ENCODE measurements at regions of chr3 and their contacts with region 1.

Region 1: GRCh38 chr3:98039322-98040024 is 4.4 kb upstream of the GABRR3 start:
- DNase-seq: peak; percentile 17 to 81
- H3K4me3 ChIP-seq: peak overlapping the region; percentile 28 to 70 (median 48); a peak in 5 of 8 replicates
- H3K27ac ChIP-seq: no peak overlapping the region
- H3K4me1 ChIP-seq: no peaks in the 10 kb centered on the region
- H3K27me3 ChIP-seq: no peaks in the 10 kb centered on the region
- CTCF ChIP-seq: peak in 2 of 3 experiments; percentile 66 to 73; a peak in 3 of 4 replicates
- EP300 ChIP-seq: no peak
- POLR2A ChIP-seq: no peak
- RAD21 ChIP-seq: peak; percentile 83 to 88

Region 2: GRCh38 chr3:98022978-98023820 is 16.3 kb before region 1 on chr3:
- CTCF ChIA-PET with region 1: interaction called, 57 read pairs
- POLR2A ChIA-PET with region 1: no interaction called
- DNase-seq: peak; percentile 71 to 99
- H3K4me3 ChIP-seq: no peak overlapping the region
- H3K27ac ChIP-seq: no peak overlapping the region
- H3K4me1 ChIP-seq: no peaks in the 10 kb centered on the region
- H3K27me3 ChIP-seq: no peaks in the 10 kb centered on the region
- CTCF ChIP-seq: peak; percentile 74 to 91 (median 83)
- EP300 ChIP-seq: no peak
- POLR2A ChIP-seq: no peak
- RAD21 ChIP-seq: peak; percentile 95 to 96

Region 3: DNA sequence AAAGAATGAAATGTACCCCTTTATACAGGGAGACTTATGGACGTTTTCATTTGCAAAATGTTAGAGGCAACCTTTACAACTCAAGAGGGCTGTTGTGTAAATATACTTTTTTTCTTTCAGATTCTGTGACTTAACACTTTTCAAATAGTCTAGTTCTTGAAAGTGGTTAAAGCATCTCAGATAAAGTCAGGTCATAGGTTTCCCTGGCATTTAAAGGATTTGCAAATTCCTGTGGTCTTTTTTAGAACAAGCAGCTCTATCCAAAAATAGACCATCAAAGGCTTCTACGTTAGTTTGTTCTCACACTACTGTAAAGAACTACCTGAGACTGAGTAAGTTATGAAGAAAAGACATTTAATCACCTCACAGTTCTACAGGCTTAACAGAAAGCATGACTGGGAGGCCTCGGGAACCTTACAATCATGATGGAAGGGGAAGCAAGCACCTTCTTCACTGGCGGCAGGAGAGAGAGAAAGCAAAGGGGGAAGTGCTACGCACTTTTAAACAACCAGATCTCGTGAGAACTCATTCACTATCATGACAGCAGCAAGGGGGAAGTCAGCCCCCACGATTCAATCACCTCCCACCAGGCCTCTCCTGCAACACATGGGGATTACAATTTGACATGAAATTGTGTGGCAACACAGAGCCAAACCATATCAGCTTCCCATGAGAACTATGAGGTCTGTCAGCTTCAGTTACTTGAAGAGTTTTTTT is 18.9 kb after region 1 on chr3:
- CTCF ChIA-PET with region 1: interaction called, 24 read pairs
- POLR2A ChIA-PET with region 1: no interaction called
- DNase-seq: no peak
- H3K4me3 ChIP-seq: no peak overlapping the region
- H3K27ac ChIP-seq: no peak overlapping the region
- H3K4me1 ChIP-seq: no peaks in the 10 kb centered on the region
- H3K27me3 ChIP-seq: no peaks in the 10 kb centered on the region
- CTCF ChIP-seq: no peak
- EP300 ChIP-seq: no peak
- POLR2A ChIP-seq: no peak
- RAD21 ChIP-seq: no peak

Region 4: DNA sequence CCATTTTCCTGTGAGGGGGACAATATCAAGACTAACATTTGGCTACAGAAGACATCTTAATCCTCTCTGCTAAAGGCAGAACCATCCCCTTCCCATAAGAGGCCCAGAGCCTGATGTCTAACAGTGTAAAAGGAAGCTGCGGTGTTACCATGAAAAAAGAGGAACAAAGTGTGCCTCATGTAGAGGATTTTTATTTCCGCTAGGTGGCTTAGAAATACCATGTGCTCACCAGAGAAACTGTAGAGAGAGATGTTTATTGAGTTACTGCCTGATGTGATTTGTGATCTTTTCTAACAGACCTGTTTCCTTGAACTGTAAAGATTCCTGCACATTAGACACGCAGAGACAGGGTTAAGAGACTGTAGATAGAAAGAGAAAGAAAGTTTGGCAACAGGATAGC is 149.1 kb after region 1 on chr3:
- CTCF ChIA-PET with region 1: interaction called, 40 read pairs
- POLR2A ChIA-PET with region 1: no interaction called
- DNase-seq: no peak
- H3K4me3 ChIP-seq: no peak overlapping the region
- H3K27ac ChIP-seq: no peak overlapping the region
- H3K4me1 ChIP-seq: 0 out of 7 replicates have a peak, but pooled peaks cover 0 to 2% (median 0%) of the 10 kb centered on the region in 4 experiments
- H3K27me3 ChIP-seq: no peaks in the 10 kb centered on the region
- CTCF ChIP-seq: peak in 2 of 3 experiments; percentile 49 to 52; a peak in 3 of 4 replicates
- EP300 ChIP-seq: no peak
- POLR2A ChIP-seq: no peak
- RAD21 ChIP-seq: peak; percentile 55 to 57

Region 5: DNA sequence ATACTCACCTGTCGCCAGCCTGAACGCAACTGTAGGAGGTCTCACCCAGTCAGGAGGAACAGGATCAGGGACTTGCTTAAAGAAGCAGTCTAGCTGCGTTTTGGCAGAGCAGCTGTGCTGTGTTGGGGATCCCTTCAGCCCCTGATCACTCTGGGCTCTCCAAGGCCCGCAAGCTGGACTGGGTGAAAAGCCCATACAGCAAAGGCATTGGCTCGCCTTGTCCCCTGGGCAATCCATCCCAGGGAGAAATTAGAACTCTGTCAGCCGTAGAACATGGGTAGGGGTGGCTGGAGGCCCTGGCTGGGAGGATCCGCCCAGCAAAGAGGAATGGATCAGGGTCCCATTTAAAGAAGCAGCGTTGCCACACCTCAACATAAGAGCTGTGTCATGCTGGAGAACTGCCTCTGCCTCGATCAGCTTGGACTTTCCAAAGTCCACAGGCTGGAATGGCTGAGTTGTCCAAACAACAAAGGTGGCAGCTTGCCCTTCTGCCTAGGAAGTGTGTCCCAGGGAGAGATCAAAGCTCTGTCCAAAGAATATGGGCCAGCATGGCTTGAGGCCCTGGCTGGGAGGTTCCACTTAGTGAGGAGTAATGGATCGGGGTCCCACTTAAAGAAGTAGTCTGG is 252.0 kb after region 1 on chr3:
- CTCF ChIA-PET with region 1: interaction called, 11 read pairs
- POLR2A ChIA-PET with region 1: no interaction called
- DNase-seq: no peak
- H3K4me3 ChIP-seq: no peak overlapping the region
- H3K27ac ChIP-seq: no peak overlapping the region
- H3K4me1 ChIP-seq: no peaks in the 10 kb centered on the region
- H3K27me3 ChIP-seq: no peaks in the 10 kb centered on the region
- CTCF ChIP-seq: no peak
- EP300 ChIP-seq: no peak
- POLR2A ChIP-seq: no peak
- RAD21 ChIP-seq: no peak

Region 6: DNA sequence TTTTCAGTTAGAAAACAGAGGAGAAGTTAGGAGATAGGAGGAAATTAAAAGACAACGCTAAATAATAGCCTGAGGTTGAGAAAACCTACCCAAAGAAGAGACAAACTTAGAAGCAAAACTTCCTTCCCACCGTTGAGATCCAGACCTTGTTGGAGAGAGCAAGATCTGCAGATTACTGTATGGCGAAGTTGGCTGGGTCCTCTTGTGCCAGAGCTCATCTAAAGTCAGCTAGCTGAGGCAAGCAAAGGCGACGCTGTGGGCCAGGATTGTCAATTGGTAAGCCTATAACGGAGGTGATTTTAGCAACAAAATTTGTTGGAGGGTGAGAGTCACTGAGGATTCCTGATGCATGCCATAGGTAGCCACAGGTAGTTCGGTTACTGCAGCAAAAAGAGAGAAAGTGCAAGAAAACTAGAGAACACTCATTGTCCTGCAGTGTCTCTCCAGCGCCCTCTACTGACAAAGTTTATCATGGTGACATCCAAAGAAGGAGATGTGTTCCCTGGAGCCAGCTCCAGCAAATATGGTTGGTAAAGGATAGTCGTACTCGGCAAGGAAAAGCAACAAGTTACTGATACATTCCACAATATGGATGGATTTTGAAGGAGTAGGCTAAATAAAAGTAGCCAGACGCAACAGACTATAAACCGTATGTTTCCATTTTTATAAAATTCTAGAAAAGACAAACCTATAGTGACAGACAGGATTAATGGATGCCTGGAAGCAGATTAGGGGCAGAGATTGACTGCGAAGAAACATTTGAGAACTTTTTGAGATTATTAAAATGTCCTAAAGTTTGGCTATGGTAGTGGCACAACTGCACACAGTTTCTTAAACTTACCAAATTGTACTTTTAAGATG is 304.4 kb after region 1 on chr3:
- CTCF ChIA-PET with region 1: interaction called, 65 read pairs
- POLR2A ChIA-PET with region 1: no interaction called
- DNase-seq: peak in 1 of 2 experiments; percentile 76
- H3K4me3 ChIP-seq: no peak overlapping the region
- H3K27ac ChIP-seq: no peak overlapping the region
- H3K4me1 ChIP-seq: no peaks in the 10 kb centered on the region
- H3K27me3 ChIP-seq: no peaks in the 10 kb centered on the region
- CTCF ChIP-seq: peak in 2 of 3 experiments; percentile 80 to 90; a peak in 3 of 4 replicates
- EP300 ChIP-seq: no peak
- POLR2A ChIP-seq: no peak
- RAD21 ChIP-seq: peak; percentile 86 to 89

Measured in H1 (cell line).